ENCODE measurements at regions of chr6 and their contacts with region 1.

Region 1: DNA sequence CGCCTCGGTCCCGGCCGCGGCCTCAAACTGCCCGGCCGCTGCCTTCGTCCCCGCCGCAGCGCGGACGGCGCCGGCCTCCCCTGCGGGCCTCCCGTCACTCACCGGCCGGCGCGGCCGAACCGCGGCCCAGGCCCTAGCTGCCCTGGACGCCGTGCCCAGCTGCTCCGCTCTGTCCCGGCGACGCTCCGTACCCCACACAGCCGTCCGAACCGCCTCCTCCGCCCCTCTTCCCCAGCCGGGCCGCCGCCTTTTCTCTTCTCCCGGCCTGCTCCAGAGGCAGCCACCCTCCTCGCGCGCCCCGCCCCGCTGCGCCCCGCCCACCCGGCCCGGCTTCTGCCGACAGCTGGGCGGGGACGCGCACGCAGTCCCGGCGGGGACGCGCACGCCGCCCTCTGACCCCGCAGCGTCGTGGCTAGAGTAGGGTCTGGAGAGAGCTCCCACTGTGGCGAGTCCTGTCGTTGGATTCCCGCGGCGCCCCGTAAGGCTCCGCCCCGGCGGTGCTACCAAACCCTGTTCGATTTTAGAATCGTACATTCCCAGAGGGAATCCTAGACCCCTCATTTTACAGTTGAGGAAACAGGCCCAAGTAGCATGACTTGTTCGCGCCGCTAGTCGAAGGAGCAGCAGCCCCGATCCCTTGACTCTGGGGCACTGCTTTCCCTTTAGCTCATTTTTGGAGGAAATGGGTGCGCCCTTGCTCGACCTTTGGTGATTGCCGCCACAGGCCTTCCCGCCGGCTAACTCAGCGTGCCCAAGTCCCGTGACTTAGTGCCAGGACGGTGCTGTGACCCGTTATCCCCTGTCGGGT is at the start of gene FBXO30:
- DNase-seq: peak; percentile 79 to 88
- ATAC-seq: peak; percentile 97
- total RNA-seq, gene FBXO30: 5.5 to 9.4 TPM

Region 2: DNA sequence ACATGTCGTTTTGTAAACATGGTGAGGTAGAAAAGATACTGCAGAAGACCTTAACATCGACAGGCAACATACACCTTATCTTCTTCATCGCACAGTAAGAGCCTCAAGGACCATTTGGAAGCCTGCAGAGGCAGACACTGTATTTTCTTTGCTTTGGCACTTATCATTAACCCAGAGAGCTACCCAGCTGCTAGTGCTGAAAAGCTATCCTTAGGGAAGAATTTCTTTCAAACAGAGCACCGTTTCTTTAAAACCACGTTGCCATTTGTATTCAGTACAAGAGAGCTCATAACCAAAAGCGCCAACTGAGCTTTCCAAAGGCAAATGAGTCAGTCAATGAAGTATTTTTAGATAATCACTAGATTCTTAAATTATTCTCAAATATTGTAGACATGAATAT is 386.0 kb before region 1 on chr6:
- intact Hi-C with region 1: no loop called
- DNase-seq: no peak
- ATAC-seq: no peak

Region 3: GRCh38 chr6:145734486-145735355 is 80.0 kb before region 1 on chr6:
- intact Hi-C with region 1: loop called in 1 of 2 experiments (anchors 5 kb)
- DNase-seq: peak; percentile 91 to 92
- ATAC-seq: peak; percentile 88